B cell (primary cell): ENCODE measurements at regions of chr6 and their contacts with region 1.

Region 1: GRCh38 chr6:3751730-3752542 is 423 bp upstream of the PXDC1 start:
- DNase-seq: peak; percentile 86
- ATAC-seq: peak; percentile 73
- H3K4me3 ChIP-seq: peak overlapping the region in 4 of 5 experiments; percentile 45 to 73 (median 62)
- H3K4me3 Mint-ChIP-seq: peak overlapping the region; percentile 75
- H3K27ac ChIP-seq: peak overlapping the region; percentile 36
- H3K27ac Mint-ChIP-seq: peak overlapping the region; percentile 53
- H3K4me1 ChIP-seq: peaks cover 36 to 51% of the 10 kb centered on the region in 2 donors
- H3K4me1 Mint-ChIP-seq: peaks cover 57% of the 10 kb centered on the region
- H3K27me3 ChIP-seq: peaks cover 0 to 19% (median 5%) of the 10 kb centered on the region in 4 experiments
- H3K27me3 Mint-ChIP-seq: peaks cover 7% of the 10 kb centered on the region
- CTCF ChIP-seq: peak; percentile 67

Region 2: DNA sequence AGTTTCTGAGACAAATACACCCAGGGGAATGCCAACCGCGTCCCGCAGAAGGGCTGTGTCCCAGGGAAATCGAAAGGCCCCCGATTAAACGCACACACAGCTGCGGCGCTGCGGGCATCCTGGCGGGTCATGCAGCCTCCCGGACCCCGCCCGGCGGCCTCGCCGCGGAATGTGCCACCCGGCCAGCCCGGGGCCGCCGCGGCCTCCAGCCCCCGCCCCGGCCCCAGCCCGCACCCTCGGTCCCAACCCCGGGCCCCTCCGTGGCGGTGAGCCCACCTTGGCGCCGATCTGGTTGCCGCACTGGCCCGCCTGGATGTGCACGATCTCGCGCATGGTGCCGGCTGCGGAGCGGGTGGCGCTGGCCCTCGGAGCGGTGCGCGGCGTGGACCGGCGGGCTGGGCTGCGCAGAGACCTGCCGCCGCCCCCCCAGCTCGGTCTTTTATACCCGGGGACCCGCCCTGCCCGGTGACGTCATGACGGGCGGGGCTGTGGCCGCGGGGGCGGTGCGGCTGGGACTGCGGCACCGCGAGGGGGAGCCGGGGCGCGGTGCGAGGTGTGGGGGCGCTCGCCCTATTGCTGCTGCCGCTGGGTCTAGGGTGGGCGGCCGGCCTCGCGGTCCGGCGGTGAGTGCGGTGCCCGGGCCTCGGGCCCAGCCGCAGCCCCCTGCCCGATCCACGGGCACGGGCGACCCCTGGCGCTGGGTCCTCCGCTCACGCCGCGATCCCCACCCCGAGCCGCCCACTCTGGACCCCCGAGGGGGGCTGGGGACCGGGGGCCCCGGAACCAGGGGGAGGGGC is 594.6 kb before region 1 on chr6 and contains the start of gene TUBB2A:
- CTCF ChIA-PET with region 1: no interaction called
- POLR2A ChIA-PET with region 1: no interaction called
- intact Hi-C with region 1: loop called (anchors 5 kb)
- DNase-seq: peak; percentile 91
- ATAC-seq: peak; percentile 90
- H3K4me3 ChIP-seq: peak within 1 kb of the TSS; percentile 47 to 93 (median 65)
- H3K4me3 Mint-ChIP-seq: peak within 1 kb of the TSS; percentile 89
- H3K27ac ChIP-seq: peak within 1 kb of the TSS in 1 of 2 donors; percentile 67
- H3K27ac Mint-ChIP-seq: peak within 1 kb of the TSS; percentile 88
- H3K4me1 ChIP-seq: peaks cover 8 to 18% of the 10 kb centered on the region in 2 donors
- H3K4me1 Mint-ChIP-seq: peaks cover 24% of the 10 kb centered on the region
- H3K27me3 ChIP-seq: peaks cover 0 to 5% (median 0%) of the 10 kb centered on the region in 4 experiments
- H3K27me3 Mint-ChIP-seq: peaks cover 7% of the 10 kb centered on the region
- CTCF ChIP-seq: peak; percentile 70
- total RNA-seq, gene TUBB2A: 4.0 and 4.2 TPM in 2 replicates

Region 3: GRCh38 chr6:3456755-3457466 is 295.0 kb before region 1 on chr6 and contains the start of gene SLC22A23:
- CTCF ChIA-PET with region 1: no interaction called
- POLR2A ChIA-PET with region 1: no interaction called
- intact Hi-C with region 1: loop called (anchors 5 kb)
- DNase-seq: peak; percentile 81
- ATAC-seq: peak; percentile 80
- H3K4me3 ChIP-seq: peak within 1 kb of the TSS in 4 of 5 experiments; percentile 25 to 51 (median 45)
- H3K4me3 Mint-ChIP-seq: peak within 1 kb of the TSS; percentile 81
- H3K27ac ChIP-seq: no peak within 1 kb of the TSS
- H3K27ac Mint-ChIP-seq: peak within 1 kb of the TSS; percentile 42
- H3K4me1 ChIP-seq: peaks cover 23 to 24% of the 10 kb centered on the region in 2 donors
- H3K4me1 Mint-ChIP-seq: peaks cover 5% of the 10 kb centered on the region
- H3K27me3 ChIP-seq: peaks cover 0 to 58% (median 43%) of the 10 kb centered on the region in 4 experiments
- H3K27me3 Mint-ChIP-seq: peaks cover 38% of the 10 kb centered on the region
- CTCF ChIP-seq: peak; percentile 75
- total RNA-seq, gene SLC22A23: 0.75 and 1.4 TPM in 2 replicates

Region 4: GRCh38 chr6:3848925-3849605 is 97.1 kb after region 1 on chr6 and contains the start of gene FAM50B:
- CTCF ChIA-PET with region 1: interaction called, 82 read pairs
- POLR2A ChIA-PET with region 1: interaction called, 6 read pairs
- intact Hi-C with region 1: loop called (anchors 1 kb)
- DNase-seq: peak; percentile 92
- ATAC-seq: peak; percentile 94
- H3K4me3 ChIP-seq: peak within 1 kb of the TSS; percentile 11 to 66 (median 65)
- H3K4me3 Mint-ChIP-seq: peak within 1 kb of the TSS; percentile 90
- H3K27ac ChIP-seq: peak within 1 kb of the TSS; percentile 54 to 65
- H3K27ac Mint-ChIP-seq: peak within 1 kb of the TSS; percentile 94
- H3K4me1 ChIP-seq: peaks cover 6 to 21% of the 10 kb centered on the region in 2 donors
- H3K4me1 Mint-ChIP-seq: peaks cover 21% of the 10 kb centered on the region
- H3K27me3 ChIP-seq: no peaks in the 10 kb centered on the region
- H3K27me3 Mint-ChIP-seq: no peaks in the 10 kb centered on the region
- CTCF ChIP-seq: peak; percentile 84
- total RNA-seq, gene FAM50B: 8.3 and 9.8 TPM in 2 replicates

Region 5: GRCh38 chr6:3929281-3929798 is 177.4 kb after region 1 on chr6:
- CTCF ChIA-PET with region 1: interaction called, 11 read pairs
- POLR2A ChIA-PET with region 1: no interaction called
- intact Hi-C with region 1: no loop called
- DNase-seq: no peak
- ATAC-seq: no peak
- H3K4me3 ChIP-seq: no peak overlapping the region
- H3K4me3 Mint-ChIP-seq: no peak overlapping the region
- H3K27ac ChIP-seq: no peak overlapping the region
- H3K27ac Mint-ChIP-seq: no peak overlapping the region
- H3K4me1 ChIP-seq: no peaks in the 10 kb centered on the region
- H3K4me1 Mint-ChIP-seq: no peaks in the 10 kb centered on the region
- H3K27me3 ChIP-seq: no peaks in the 10 kb centered on the region
- H3K27me3 Mint-ChIP-seq: peaks cover 7% of the 10 kb centered on the region
- CTCF ChIP-seq: no peak

Region 6: DNA sequence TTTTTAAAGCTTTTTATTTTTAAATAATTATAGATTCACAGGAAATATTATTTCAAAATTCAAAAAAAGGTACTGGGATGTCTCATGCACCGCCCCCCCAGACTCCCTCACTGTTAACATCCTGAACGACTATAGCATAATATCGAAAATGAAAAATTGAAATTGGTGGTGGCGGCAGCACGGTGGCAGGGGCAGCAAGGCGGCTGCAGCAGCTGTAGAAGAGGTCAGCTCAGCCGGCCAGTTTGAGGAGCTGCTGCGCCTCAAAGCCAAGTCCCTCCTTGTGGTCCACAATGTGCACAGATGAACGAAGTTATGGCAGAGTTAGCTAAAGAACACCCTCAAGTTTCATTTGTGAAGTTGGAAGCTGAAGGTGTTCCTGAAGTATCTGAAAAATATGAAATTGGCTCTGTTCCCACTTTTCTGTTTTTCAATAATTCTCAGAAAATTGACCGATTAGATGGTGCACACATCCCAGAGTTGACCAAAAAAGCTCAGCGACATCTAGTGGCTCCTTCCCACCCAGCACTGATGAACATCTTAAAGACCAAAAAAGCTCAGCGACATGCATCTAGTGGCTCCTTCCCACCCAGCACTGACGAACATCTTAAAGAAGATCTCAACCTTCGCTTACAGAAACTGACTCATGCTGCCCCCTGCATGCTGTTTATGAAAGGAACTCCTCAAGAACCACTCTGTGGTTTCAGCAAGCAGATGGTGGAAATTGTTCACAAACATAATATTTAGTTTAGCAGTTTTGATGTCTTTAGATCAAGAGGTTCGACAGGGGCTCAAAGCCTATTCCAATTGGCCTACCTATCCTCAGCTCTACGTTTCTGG is 226.2 kb after region 1 on chr6:
- CTCF ChIA-PET with region 1: interaction called, 28 read pairs
- POLR2A ChIA-PET with region 1: no interaction called
- intact Hi-C with region 1: no loop called
- DNase-seq: peak; percentile 65
- ATAC-seq: peak; percentile 95
- H3K4me3 ChIP-seq: no peak overlapping the region
- H3K4me3 Mint-ChIP-seq: no peak overlapping the region
- H3K27ac ChIP-seq: no peak overlapping the region
- H3K27ac Mint-ChIP-seq: no peak overlapping the region
- H3K4me1 ChIP-seq: peaks cover 0 to 7% of the 10 kb centered on the region in 2 donors
- H3K4me1 Mint-ChIP-seq: peaks cover 4% of the 10 kb centered on the region
- H3K27me3 ChIP-seq: peaks cover 0 to 3% (median 0%) of the 10 kb centered on the region in 4 experiments
- H3K27me3 Mint-ChIP-seq: peaks cover 8% of the 10 kb centered on the region
- CTCF ChIP-seq: peak; percentile 70

Region 7: DNA sequence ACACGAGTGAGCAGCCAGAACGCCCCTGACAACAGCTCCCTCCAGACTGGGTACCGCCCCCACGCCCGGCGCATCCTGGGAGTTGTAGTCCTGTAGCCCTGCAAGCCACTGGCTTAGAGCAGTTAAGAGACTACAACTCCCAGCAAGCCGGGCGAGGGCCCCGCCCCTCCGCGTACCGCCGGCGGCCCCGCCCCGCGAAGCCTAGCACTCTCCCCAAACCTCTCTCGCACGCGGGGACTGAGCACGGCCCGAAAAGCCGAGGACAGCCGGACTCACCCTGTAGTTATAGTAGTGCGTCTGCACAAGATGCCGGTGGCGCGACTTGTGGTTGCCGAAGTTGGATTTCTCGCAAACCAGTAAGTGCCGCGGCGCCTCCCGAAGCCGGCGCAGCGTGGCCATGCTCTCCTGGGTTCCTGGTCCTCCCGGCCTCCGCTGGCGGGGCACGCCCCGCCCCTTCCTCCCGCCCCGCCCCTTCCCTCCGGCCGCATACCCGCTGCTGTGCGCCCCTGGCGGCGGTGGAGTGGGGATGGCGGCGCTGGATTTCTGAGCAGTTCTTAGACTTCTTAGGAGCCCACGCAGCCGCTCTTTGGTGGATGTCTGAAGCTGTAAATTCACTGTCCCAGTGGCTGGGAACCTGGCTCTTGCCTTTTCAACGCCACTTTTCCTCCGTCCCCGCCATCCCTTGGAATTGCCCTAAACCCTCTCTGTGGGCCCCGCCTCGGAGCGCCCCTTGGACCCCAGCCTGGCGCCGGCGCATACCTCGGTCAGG is 1251.9 kb after region 1 on chr6 and contains the start of gene RPP40:
- CTCF ChIA-PET with region 1: no interaction called
- POLR2A ChIA-PET with region 1: no interaction called
- intact Hi-C with region 1: loop called (anchors 5 kb)
- DNase-seq: peak; percentile 99
- ATAC-seq: peak; percentile 92
- H3K4me3 ChIP-seq: peak within 1 kb of the TSS; percentile 70 to 82 (median 71)
- H3K4me3 Mint-ChIP-seq: peak within 1 kb of the TSS; percentile 98
- H3K27ac ChIP-seq: peak within 1 kb of the TSS; percentile 81 to 90
- H3K27ac Mint-ChIP-seq: peak within 1 kb of the TSS; percentile 99
- H3K4me1 ChIP-seq: peaks cover 6 to 14% of the 10 kb centered on the region in 2 donors
- H3K4me1 Mint-ChIP-seq: peaks cover 10% of the 10 kb centered on the region
- H3K27me3 ChIP-seq: no peaks in the 10 kb centered on the region
- H3K27me3 Mint-ChIP-seq: no peaks in the 10 kb centered on the region
- CTCF ChIP-seq: peak; percentile 82
- total RNA-seq, gene RPP40: 3.8 TPM in 2 replicates